ENCODE measurements at regions of chr13 and their contacts with region 1.

Region 1: DNA sequence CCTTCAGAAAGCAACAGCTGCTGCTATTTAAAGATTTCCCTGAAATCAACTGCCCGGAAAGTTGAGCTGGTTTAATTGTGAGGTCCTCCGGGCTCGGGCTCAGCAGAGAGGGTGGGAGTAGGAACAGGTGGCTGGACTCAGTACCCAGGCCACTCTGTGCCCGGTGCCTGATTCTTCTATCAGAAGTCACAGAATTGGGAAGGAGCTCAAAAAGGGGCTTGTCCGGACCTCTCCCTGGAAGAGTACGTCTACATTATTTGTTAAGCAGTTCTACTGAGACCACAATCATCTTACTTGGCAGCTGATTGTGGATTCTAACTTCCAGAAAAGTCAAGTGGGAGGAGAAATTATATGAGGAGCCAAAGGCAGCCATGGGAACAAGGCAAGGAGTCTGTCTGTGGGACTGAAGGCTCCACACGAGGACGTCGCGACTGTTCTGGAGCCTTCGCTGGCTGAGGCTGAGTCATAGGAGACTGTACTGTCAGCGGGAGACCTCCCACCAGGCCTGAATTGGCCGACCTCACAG is 91.7 kb upstream of the ANKRD10 start:
- DNase-seq: peak; percentile 15 to 67 (median 37)
- ATAC-seq: peak; percentile 92
- H3K4me3 ChIP-seq: no peak overlapping the region
- H3K27ac ChIP-seq: peak overlapping the region; percentile 44; the same call in 2 of the 3 replicates
- H3K4me1 ChIP-seq: peaks cover 3 to 11% of the 10 kb centered on the region in 2 experiments; a peak in 3 of 5 replicates
- H3K27me3 ChIP-seq: no peaks in the 10 kb centered on the region
- CTCF ChIP-seq: no peak
- EP300 ChIP-seq: no peak
- POLR2A ChIP-seq: no peak
- RAD21 ChIP-seq: no peak

Region 2: GRCh38 chr13:110944121-110944967 is 62.2 kb before region 1 on chr13:
- CTCF ChIA-PET with region 1: no interaction called
- POLR2A ChIA-PET with region 1: no interaction called
- in situ Hi-C with region 1: no loop called
- intact Hi-C with region 1: loop called (anchors 1 kb)
- DNase-seq: peak; percentile 39 to 81 (median 52)
- ATAC-seq: peak; percentile 97
- H3K4me3 ChIP-seq: no peak overlapping the region
- H3K27ac ChIP-seq: peak overlapping the region; percentile 59; the same call in 2 of the 3 replicates
- H3K4me1 ChIP-seq: peaks cover 10 to 13% of the 10 kb centered on the region in 2 experiments; a peak in 4 of 5 replicates
- H3K27me3 ChIP-seq: no peaks in the 10 kb centered on the region
- CTCF ChIP-seq: peak; percentile 81 to 89 (median 88)
- EP300 ChIP-seq: no peak
- POLR2A ChIP-seq: no peak
- RAD21 ChIP-seq: peak; percentile 91 to 99

Region 3: GRCh38 chr13:110980921-110981320 is 25.6 kb before region 1 on chr13:
- CTCF ChIA-PET with region 1: no interaction called
- POLR2A ChIA-PET with region 1: no interaction called
- in situ Hi-C with region 1: no loop called
- intact Hi-C with region 1: loop called (anchors 2 kb)
- DNase-seq: peak in 1 of 4 experiments; percentile 53
- ATAC-seq: peak; percentile 18; the same call in 1 of the 3 replicates
- H3K4me3 ChIP-seq: no peak overlapping the region
- H3K27ac ChIP-seq: peak overlapping the region; percentile 64
- H3K4me1 ChIP-seq: peaks cover 6 to 60% of the 10 kb centered on the region in 2 experiments; a peak in 4 of 5 replicates
- H3K27me3 ChIP-seq: no peaks in the 10 kb centered on the region
- CTCF ChIP-seq: no peak
- EP300 ChIP-seq: no peak
- POLR2A ChIP-seq: no peak
- RAD21 ChIP-seq: no peak

Region 4: GRCh38 chr13:111129465-111130115 is 123.0 kb after region 1 on chr13:
- CTCF ChIA-PET with region 1: no interaction called
- POLR2A ChIA-PET with region 1: no interaction called
- in situ Hi-C with region 1: no loop called
- intact Hi-C with region 1: no loop called
- DNase-seq: no peak
- ATAC-seq: no peak
- H3K4me3 ChIP-seq: no peak overlapping the region
- H3K27ac ChIP-seq: no peak overlapping the region
- H3K4me1 ChIP-seq: no peaks in the 10 kb centered on the region; a peak in 1 of 5 replicates
- H3K27me3 ChIP-seq: peaks cover 0 to 12% of the 10 kb centered on the region in 2 experiments; a peak in 2 of 5 replicates
- CTCF ChIP-seq: no peak
- EP300 ChIP-seq: no peak
- POLR2A ChIP-seq: no peak
- RAD21 ChIP-seq: no peak